Gastrocnemius medialis (tissue), 4 donors: ENCODE measurements at regions of chr13 and their contacts with region 1.

Region 1: DNA sequence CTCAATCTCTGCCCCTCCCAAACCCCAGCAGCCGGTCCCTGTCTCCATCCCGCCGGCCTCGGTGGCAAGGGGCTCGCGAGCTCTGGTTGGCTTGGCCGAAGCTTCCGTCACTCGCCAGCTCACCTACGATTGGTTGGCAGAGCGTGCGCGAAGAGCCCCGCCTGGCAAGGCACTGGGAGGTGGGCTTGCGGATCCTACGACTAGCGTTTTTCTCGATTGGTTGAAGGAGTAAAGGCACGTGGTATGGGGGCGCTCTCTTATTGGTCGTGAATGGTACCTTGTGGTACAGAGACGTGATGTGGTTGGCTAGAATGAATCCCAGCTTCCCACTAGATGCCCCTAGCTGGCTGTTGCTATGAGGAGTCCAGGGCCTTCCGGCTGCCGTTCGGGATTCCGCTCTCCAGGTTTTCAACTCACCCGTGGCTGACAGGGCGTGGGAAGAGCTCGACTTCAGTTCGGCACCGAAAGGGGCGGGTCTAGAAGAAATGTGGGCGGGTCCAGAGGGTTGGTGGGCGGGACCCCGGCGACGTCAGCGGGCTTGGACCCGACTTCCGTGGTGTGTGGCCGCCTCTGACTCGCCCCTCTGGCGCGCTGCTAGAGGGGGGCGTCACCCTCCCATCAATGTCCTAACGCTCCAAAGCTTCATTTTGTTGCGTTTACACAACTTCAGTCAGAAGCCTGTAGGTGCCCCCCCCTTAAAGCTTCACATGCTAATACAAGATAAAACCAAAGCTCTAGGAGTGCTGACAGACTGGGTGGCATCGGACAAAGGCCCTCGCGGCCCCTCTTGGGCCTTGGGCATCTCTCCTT is 847 bp upstream of the RAP2A start:
- DNase-seq: peak; percentile 98 to 99
- ATAC-seq: peak; percentile 93 to 94
- H3K4me3 ChIP-seq: peak overlapping the region; percentile 73 to 99 (median 96)
- H3K27ac ChIP-seq: peak overlapping the region; percentile 92 to 100 (median 100)
- H3K4me1 ChIP-seq: peaks cover 38 to 51% of the 10 kb centered on the region in 2 donors
- H3K27me3 ChIP-seq: no peaks in the 10 kb centered on the region
- CTCF ChIP-seq: no peak
- POLR2A ChIP-seq: peak; percentile 54 to 77

Region 2: GRCh38 chr13:95968906-95969305 is 1464.2 kb before region 1 on chr13:
- in situ Hi-C with region 1: no loop called
- intact Hi-C with region 1: no loop called
- DNase-seq: no peak
- ATAC-seq: no peak
- H3K4me3 ChIP-seq: no peak overlapping the region
- H3K27ac ChIP-seq: no peak overlapping the region
- H3K4me1 ChIP-seq: no peaks in the 10 kb centered on the region
- H3K27me3 ChIP-seq: no peaks in the 10 kb centered on the region
- CTCF ChIP-seq: no peak
- POLR2A ChIP-seq: no peak

Region 3: DNA sequence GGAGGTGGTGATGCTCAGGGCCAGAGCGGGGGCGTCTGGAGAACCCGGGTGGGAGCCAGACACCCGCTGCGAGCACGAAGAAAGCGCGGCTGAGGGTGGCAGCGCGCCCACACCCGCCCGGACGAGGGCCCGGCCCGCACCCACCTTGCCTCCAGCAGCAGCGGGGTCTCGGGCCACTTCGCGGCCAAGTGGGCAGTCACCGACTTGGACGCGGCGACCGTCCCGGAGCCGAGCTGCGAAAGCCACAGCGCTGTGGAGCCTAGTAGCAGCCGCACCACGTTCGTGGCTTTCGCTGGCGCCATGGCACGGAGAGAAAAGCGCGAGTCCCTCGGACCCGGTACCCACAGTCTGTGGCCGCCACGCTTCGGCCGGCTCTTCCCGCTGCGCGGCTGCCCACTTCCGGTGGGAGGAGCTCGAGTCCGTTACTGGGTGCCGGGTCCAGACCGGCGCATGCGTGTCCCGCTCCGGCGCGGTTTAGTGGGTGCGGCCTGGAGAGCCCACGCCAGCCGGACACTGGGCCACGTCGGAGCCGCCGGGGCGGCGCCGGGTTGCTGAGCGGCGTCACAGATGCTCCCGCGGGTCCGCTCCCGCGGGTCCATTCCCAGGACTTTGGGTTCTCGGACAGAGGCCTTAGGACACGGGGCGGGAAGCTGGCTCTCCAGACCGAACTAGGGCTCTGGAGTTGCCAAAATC is 1380.0 kb before region 1 on chr13 and contains the start of gene UGGT2:
- in situ Hi-C with region 1: no loop called
- intact Hi-C with region 1: loop called (anchors 10 kb)
- DNase-seq: peak; percentile 78 to 90
- ATAC-seq: peak; percentile 94 to 95
- H3K4me3 ChIP-seq: peak within 1 kb of the TSS; percentile 66 to 97 (median 94)
- H3K27ac ChIP-seq: peak within 1 kb of the TSS; percentile 78 to 83 (median 80)
- H3K4me1 ChIP-seq: peaks cover 5 to 9% of the 10 kb centered on the region in 2 donors
- H3K27me3 ChIP-seq: no peaks in the 10 kb centered on the region
- CTCF ChIP-seq: peak in 2 of 5 experiments; percentile 14 to 31
- POLR2A ChIP-seq: peak; percentile 70 to 72
- total RNA-seq, gene UGGT2: 4.0 to 10.6 (median 6.8) TPM

Region 4: GRCh38 chr13:97124916-97125809 is 308.0 kb before region 1 on chr13:
- in situ Hi-C with region 1: no loop called
- intact Hi-C with region 1: loop called (anchors 1 kb)
- DNase-seq: peak; percentile 67 to 77
- ATAC-seq: peak; percentile 88 to 92
- H3K4me3 ChIP-seq: peak overlapping the region; percentile 6 to 13 (median 10)
- H3K27ac ChIP-seq: peak overlapping the region; percentile 79 to 84 (median 81)
- H3K4me1 ChIP-seq: peaks cover 30 to 49% of the 10 kb centered on the region in 2 donors
- H3K27me3 ChIP-seq: no peaks in the 10 kb centered on the region
- CTCF ChIP-seq: peak in 3 of 5 experiments; percentile 42 to 43 (median 43)
- POLR2A ChIP-seq: no peak

Region 5: GRCh38 chr13:97257800-97258799 is 175.0 kb before region 1 on chr13:
- in situ Hi-C with region 1: no loop called
- intact Hi-C with region 1: loop called (anchors 10 kb)
- DNase-seq: peak; percentile 48 to 79
- ATAC-seq: peak; percentile 37 to 57
- H3K4me3 ChIP-seq: no peak overlapping the region
- H3K27ac ChIP-seq: peak overlapping the region; percentile 72 to 87 (median 76)
- H3K4me1 ChIP-seq: peaks cover 94 to 97% of the 10 kb centered on the region in 2 donors
- H3K27me3 ChIP-seq: no peaks in the 10 kb centered on the region
- CTCF ChIP-seq: no peak
- POLR2A ChIP-seq: no peak

Region 6: GRCh38 chr13:97372936-97373335 is 60.2 kb before region 1 on chr13:
- in situ Hi-C with region 1: loop called in 1 of 4 experiments (anchors 10 kb)
- intact Hi-C with region 1: no loop called
- DNase-seq: no peak
- ATAC-seq: no peak
- H3K4me3 ChIP-seq: no peak overlapping the region
- H3K27ac ChIP-seq: no peak overlapping the region
- H3K4me1 ChIP-seq: peaks cover 0 to 8% of the 10 kb centered on the region in 2 donors
- H3K27me3 ChIP-seq: no peaks in the 10 kb centered on the region
- CTCF ChIP-seq: no peak
- POLR2A ChIP-seq: no peak